ENCODE measurements at regions of chr17 and their contacts with region 1.

Region 1: GRCh38 chr17:77391668-77392375 is 251.1 kb downstream of the SEC14L1 start:
- DNase-seq: peak; percentile 88
- H3K4me3 Mint-ChIP-seq: peak overlapping the region; percentile 87
- H3K27ac Mint-ChIP-seq: peak overlapping the region; percentile 90
- H3K4me1 Mint-ChIP-seq: peaks cover 74% of the 10 kb centered on the region
- H3K27me3 Mint-ChIP-seq: no peaks in the 10 kb centered on the region

Region 2: GRCh38 chr17:76726231-76726775 is 665.5 kb before region 1 on chr17 and contains the start of gene JMJD6:
- intact Hi-C with region 1: no loop called
- DNase-seq: peak; percentile 98
- H3K4me3 Mint-ChIP-seq: peak within 1 kb of the TSS; percentile 96
- H3K27ac Mint-ChIP-seq: peak within 1 kb of the TSS; percentile 97
- H3K4me1 Mint-ChIP-seq: peaks cover 39% of the 10 kb centered on the region
- H3K27me3 Mint-ChIP-seq: no peaks in the 10 kb centered on the region
- total RNA-seq, gene JMJD6: 82.5 and 86.3 TPM in 2 replicates

Region 3: DNA sequence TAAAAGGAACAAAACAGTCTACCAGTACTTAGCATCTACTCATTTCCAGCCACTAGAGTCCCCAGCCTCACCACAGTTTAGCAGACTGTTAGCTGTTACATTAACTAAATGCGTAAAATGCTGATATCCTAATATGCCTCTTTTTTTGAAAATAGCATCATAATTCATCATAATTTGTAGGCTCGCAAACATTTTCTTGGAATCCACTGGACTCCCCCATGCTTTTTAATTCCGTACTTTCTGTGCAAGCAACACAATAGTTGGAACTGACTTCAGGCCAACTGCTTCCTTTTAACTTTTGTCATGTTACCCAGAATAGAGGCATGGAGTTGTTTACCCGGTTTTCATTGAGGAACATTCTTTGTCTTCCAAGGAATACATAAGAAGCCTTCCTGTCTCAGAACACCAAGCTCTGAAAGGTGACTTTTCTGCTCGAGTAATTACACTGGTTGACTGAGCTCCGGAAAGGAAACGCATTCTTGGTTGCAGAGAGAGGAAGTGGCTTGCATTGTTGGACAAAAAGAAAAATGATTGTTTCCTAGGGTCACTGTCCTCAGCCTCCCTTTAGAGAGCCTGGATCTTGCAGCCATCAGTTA is 282.0 kb before region 1 on chr17:
- intact Hi-C with region 1: no loop called
- DNase-seq: peak; percentile 68
- H3K4me3 Mint-ChIP-seq: peak overlapping the region; percentile 48
- H3K27ac Mint-ChIP-seq: peak overlapping the region; percentile 42
- H3K4me1 Mint-ChIP-seq: peaks cover 21% of the 10 kb centered on the region
- H3K27me3 Mint-ChIP-seq: no peaks in the 10 kb centered on the region

Region 4: DNA sequence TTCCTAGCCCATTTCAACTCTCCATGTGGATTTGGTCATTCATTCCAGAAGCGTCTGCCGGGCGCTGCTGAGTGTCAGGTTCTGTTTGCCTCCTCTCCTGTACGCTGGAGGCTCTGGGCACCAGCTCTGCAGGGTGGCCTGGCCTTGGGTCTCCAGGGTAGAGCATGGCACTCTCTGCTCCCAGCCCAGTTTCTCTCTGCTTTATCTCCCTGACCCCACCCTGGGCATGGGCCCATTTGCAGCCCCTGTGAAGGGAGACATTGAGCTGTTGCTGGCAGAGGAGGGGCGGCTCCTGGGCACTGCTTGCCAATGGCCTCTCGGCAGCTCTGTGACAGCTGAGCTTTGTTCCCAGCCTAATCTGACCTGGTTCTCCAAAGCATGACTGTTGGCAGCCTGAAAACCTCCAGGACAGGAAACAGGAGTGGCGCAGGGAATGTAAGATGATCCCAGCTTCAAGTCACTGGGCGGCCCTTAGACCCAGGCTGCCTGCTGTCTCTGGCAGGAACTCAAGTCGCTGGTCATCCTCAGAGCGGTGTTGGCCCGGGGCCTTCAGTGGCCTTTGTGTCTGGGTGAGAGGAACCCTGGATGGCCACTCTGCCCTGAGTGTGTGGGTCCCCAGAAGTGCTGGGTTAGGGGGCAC is 104.3 kb before region 1 on chr17:
- intact Hi-C with region 1: no loop called
- DNase-seq: no peak
- H3K4me3 Mint-ChIP-seq: no peak overlapping the region
- H3K27ac Mint-ChIP-seq: no peak overlapping the region
- H3K4me1 Mint-ChIP-seq: peaks cover 7% of the 10 kb centered on the region
- H3K27me3 Mint-ChIP-seq: peaks cover 15% of the 10 kb centered on the region

Region 5: DNA sequence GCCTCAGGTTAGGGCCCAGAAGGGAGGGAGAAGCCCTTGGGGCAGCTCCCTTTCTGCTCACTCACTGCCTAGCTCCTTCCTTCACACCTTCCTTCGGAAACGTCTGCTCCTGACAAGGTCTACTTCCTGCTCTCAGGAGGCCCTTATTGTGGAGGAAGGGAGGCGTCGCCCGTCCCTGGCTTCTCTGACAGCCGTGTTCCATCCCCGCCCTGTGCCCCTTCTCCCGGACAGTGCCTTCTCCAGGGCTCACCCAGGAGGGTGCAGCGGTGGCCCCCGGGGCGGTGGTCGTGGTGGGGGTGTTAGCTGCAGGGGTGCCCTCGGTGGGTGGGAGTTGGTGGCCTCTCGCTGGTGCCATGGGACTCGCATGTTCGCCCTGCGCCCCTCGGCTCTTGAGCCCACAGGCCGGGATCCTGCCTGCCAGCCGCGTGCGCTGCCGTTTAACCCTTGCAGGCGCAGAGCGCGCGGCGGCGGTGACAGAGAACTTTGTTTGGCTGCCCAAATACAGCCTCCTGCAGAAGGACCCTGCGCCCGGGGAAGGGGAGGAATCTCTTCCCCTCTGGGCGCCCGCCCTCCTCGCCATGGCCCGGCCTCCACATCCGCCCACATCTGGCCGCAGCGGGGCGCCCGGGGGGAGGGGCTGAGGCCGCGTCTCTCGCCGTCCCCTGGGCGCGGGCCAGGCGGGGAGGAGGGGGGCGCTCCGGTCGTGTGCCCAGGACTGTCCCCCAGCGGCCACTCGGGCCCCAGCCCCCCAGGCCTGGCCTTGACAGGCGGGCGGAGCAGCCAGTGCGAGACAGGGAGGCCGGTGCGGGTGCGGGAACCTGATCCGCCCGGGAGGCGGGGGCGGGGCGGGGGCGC is 19.2 kb before region 1 on chr17:
- intact Hi-C with region 1: loop called (anchors 1 kb)
- DNase-seq: peak; percentile 95
- H3K4me3 Mint-ChIP-seq: peak overlapping the region; percentile 81
- H3K27ac Mint-ChIP-seq: peak overlapping the region; percentile 84
- H3K4me1 Mint-ChIP-seq: peaks cover 57% of the 10 kb centered on the region
- H3K27me3 Mint-ChIP-seq: no peaks in the 10 kb centered on the region

Measured in activated CD4-positive, alpha-beta T cell treated with anti-CD3 and anti-CD28 coated beads, Interleukin-2, amount 10 ng/mL, durations not matched to agents 24 days and 14 days (primary cell).